ENCODE measurements at regions of chr2 and their contacts with region 1.

Region 1: DNA sequence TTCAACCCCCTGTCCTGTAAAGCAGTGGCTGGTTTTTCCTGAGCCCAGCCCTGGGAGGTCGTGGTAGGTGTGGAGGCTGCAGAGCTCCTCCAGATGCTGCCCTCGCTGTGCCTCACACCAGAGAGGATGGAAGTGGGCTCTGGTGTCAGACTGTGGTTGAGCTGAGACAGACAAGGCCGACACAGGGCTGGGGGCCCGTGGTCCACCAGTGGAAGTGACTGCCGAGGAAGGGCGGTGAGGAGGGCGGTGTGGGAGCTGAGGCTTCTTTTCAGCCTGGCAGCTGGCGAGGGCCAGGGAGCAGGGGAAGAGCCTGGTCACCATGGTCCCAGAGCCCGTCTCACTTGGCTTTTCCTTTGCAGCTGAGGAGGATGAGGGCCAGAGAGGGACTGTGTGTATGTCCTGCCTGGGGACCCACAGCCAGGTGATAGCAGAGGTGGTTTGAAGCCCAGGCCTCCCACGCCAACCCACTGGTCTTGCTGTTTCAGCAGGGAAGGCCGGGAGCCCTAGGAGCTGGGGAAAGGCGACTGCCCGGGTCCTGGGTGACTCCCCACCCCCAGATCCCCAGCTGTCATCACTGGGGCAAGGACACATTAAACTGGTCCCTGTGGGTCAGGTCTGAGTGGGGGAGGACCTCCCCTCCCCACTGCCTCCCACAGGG is 8.5 kb downstream of the SFTPB start:
- DNase-seq: no peak
- H3K4me3 Mint-ChIP-seq: no peak overlapping the region
- H3K27ac Mint-ChIP-seq: no peak overlapping the region
- H3K4me1 Mint-ChIP-seq: no peaks in the 10 kb centered on the region
- H3K27me3 Mint-ChIP-seq: no peaks in the 10 kb centered on the region

Region 2: DNA sequence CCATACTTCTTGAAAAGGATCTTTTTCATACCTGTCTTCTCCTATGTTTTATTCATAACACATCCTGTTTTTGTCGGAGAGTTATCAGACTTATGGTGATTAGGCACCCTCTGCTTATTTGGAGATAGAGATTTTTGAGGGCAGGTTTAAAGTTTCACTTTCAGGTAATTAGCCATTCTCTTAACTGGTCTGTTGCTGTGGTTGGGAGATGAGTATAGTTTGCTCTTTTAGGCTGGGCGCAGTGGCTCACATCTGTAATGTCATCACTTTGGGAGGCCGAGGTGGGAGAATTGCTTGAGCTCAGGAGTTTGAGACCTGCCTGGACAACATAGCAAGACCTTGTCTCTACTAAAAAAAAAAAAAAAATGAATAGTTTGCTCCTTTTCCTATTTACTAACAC is 16.7 kb before region 1 on chr2:
- CTCF ChIA-PET with region 1: interaction called, 16 read pairs
- POLR2A ChIA-PET with region 1: no interaction called
- DNase-seq: no peak
- H3K4me3 Mint-ChIP-seq: no peak overlapping the region
- H3K27ac Mint-ChIP-seq: peak overlapping the region; percentile 42
- H3K4me1 Mint-ChIP-seq: peaks cover 20% of the 10 kb centered on the region
- H3K27me3 Mint-ChIP-seq: no peaks in the 10 kb centered on the region